SK-N-SH (cell line): ENCODE measurements at regions of chrX and their contacts with region 1.

Region 1: DNA sequence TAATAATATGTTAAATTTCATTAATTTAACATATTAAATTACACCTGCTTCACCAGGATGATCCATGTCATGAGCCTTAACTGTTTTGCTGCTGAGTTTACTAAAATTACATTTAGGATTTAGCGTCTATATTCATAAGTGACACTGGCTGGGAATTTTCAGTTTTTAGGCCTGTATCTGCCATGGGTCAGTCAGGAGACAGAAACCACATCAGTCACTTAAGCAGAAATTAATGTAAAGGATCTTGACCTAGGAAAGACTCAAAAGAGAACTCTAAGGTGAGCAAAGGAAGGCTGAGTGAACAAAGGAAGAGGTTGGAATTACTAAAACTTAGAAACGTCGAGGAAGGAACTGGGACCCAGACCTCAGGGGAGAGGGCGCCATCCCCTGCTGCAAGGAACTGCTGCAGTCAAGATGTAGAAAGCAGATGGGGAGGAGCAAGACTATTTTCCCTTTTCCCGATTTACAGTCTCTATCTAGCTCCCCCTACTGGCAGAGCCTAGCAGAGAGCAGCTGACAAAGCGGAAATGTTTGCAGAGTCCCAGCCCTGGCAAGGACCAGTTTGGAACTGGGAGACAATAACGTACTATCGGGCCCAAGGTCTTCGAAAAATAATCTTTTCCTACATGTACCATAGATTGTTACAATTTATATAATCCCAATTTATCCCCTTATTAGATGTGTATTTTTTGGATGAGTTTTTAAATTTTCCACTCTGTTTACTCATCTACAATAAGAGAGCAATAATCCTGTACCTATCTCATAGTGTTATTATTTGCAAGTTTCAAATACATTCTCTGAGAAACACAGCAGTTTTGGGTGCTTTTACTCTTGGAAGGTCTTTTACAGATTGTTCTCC is 22.6 kb upstream of the RBBP7 start:
- DNase-seq: peak; percentile 67
- H3K4me3 ChIP-seq: no peak overlapping the region; a peak in 1 of 4 replicates
- H3K27ac ChIP-seq: no peak overlapping the region
- H3K4me1 ChIP-seq: no peaks in the 10 kb centered on the region
- H3K27me3 ChIP-seq: peaks cover 12% of the 10 kb centered on the region
- CTCF ChIP-seq: peak; percentile 94
- EP300 ChIP-seq: no peak
- RAD21 ChIP-seq: peak; percentile 62

Region 2: DNA sequence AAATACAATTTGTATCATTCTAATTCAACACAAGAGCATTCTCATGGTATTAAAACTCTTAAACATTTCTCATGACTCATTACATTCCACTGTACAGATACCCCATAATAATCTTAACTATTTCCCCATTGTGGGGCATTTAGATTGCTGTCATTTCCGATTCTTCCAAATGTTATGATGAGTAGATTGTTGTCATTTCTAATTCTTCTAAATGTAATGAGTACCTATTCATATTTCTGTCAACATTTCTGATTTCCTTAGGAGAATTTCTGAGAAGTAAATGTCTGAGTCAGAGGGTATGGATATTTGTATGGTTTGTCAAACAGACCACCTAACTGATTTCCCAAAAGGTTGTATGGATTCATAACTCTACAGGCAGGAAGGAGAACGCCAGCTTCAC is 234.4 kb before region 1 on chrX:
- CTCF ChIA-PET with region 1: no interaction called
- POLR2A ChIA-PET with region 1: no interaction called
- DNase-seq: no peak
- H3K4me3 ChIP-seq: no peak overlapping the region
- H3K27ac ChIP-seq: peak overlapping the region in 1 of 2 experiments; percentile 77; a peak in 2 of 4 replicates
- H3K4me1 ChIP-seq: peaks cover 0 to 29% of the 10 kb centered on the region in 2 experiments; a peak in 1 of 4 replicates
- H3K27me3 ChIP-seq: no peaks in the 10 kb centered on the region
- CTCF ChIP-seq: no peak
- EP300 ChIP-seq: peak in 1 of 2 experiments; percentile 76; a peak in 1 of 4 replicates
- RAD21 ChIP-seq: no peak

Region 3: GRCh38 chrX:16903274-16904022 is 10.7 kb after region 1 on chrX:
- CTCF ChIA-PET with region 1: interaction called, 13 read pairs
- POLR2A ChIA-PET with region 1: no interaction called
- DNase-seq: no peak
- H3K4me3 ChIP-seq: no peak overlapping the region
- H3K27ac ChIP-seq: no peak overlapping the region
- H3K4me1 ChIP-seq: no peaks in the 10 kb centered on the region
- H3K27me3 ChIP-seq: peaks cover 15% of the 10 kb centered on the region; the same call in 1 of the 2 replicates
- CTCF ChIP-seq: no peak
- EP300 ChIP-seq: no peak
- RAD21 ChIP-seq: no peak

Region 4: DNA sequence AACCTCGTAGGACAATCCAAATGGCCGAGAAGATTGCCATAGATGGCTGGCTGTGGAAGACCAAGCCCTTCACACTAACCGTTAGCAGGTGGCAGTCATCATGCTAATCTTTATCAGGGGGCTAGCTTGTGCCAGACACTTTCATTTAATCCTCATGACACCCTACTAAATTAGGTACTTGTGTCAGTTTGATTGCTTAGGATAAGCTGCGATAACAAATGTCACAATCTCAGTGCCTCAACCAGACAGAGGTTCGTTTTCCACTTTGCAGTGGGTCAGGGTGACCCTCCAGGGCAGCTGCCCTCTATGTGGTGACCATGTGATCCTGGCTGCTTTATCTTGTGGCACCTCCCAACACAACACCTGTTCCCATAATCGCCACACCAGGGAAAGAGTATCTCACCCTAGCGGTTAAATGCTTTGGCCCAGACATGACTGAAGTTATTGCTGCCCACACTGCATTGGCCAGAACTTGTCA is 114.5 kb after region 1 on chrX:
- CTCF ChIA-PET with region 1: no interaction called
- POLR2A ChIA-PET with region 1: no interaction called
- DNase-seq: peak; percentile 36
- H3K4me3 ChIP-seq: no peak overlapping the region
- H3K27ac ChIP-seq: no peak overlapping the region
- H3K4me1 ChIP-seq: no peaks in the 10 kb centered on the region
- H3K27me3 ChIP-seq: no peaks in the 10 kb centered on the region; the same call in 1 of the 2 replicates
- CTCF ChIP-seq: peak; percentile 53
- EP300 ChIP-seq: no peak
- RAD21 ChIP-seq: peak; percentile 44